Activated naive CD4-positive, alpha-beta T cell treated with anti-CD3 and anti-CD28 coated beads for 36 hours (primary cell): ENCODE measurements at regions of chr3 and their contacts with region 1.

Region 1: DNA sequence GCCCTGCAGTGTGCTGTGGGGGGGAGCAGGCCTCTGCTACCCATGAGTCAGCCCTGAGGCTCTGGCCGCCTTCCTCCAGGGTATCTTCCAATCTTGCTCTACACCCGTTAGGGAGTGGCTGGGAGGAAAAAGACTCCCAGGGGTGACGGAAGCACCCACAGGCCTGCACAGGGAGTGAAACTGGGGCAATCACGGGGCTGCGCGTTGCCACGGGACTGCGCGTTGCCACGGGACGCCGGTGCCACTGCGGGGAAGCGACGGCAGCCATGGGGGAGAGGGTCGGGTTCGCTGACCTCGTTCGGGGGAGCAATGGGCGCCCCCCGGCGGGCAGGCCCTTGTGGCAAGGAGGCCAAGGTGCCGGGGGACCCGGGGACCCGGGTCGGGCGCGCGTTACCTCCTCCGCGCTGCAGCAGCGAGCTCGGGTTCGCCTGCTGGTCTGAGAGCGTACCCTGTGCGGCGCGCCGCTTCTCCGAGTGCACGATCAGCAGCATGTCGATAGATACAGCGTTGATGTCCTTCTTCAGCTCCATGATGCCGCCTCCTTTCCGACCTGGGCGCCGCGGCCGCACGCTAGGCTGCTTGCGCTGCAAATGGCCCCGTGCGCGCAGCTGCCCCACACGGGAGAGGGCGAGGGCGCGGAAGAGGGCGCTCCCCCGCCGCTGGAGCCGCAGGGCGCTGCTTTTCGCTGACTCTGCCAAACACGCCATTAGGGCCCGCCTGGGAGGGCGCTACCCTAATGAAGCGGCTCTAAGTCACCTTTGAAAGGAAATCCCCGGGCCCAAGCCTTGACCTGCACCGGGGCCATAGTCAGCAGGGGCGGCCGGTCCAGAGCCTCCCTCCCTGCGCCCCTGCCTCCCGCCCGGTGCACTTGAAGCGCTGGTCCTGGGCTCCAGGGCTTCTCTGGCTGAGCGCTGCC is at the start of gene KY:
- DNase-seq: no peak
- H3K4me3 Mint-ChIP-seq: no peak within 1 kb of the TSS
- H3K27ac Mint-ChIP-seq: no peak within 1 kb of the TSS
- H3K4me1 Mint-ChIP-seq: no peaks in the 10 kb centered on the region
- H3K27me3 Mint-ChIP-seq: peaks cover 19% of the 10 kb centered on the region
- total RNA-seq, gene KY: not detected

Region 2: GRCh38 chr3:134430950-134431445 is 219.7 kb before region 1 on chr3:
- CTCF ChIA-PET with region 1: no interaction called
- intact Hi-C with region 1: no loop called
- DNase-seq: no peak
- H3K4me3 Mint-ChIP-seq: no peak overlapping the region
- H3K27ac Mint-ChIP-seq: no peak overlapping the region
- H3K4me1 Mint-ChIP-seq: no peaks in the 10 kb centered on the region
- H3K27me3 Mint-ChIP-seq: peaks cover 15% of the 10 kb centered on the region

Region 3: DNA sequence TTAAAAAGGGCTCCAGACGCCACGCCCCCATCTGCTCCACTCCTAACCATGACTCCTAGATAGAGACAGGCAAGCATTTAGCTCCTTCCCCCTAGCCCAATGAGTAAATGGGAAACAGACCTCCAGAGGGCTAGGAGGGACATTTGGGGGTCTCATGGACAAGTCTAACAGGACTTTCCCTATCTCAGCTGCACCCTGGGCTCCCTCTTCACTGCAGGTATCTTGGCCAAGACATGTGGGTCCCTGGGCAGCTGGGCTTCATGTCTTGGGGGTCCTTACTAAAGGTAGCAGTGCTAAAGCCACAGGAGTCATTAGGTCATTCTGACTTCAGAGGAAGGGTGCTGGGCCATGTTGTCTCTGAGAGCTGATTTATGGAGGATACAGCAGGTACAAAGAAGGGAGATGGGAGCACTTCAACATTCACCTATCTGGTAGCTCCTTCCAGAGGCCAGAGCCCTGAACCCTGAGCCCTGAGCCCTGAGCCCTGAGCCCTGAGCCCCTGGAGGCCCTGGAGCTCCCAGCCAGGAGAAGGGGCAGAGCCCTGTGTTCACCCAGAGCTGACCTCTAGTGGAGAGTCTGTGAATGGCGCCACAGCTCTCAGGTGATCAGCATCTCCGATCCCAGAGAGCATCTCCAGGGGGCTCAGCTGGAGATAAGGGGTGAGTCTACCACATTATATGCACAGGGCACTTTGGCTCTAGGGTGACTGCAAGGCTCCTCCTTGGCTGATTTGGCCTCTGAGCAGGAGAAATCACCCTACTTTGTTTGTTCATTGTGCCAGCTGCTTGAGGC is 104.3 kb after region 1 on chr3:
- CTCF ChIA-PET with region 1: interaction called, 4 read pairs
- intact Hi-C with region 1: loop called (anchors 1 kb)
- DNase-seq: peak; percentile 62
- H3K4me3 Mint-ChIP-seq: no peak overlapping the region
- H3K27ac Mint-ChIP-seq: no peak overlapping the region
- H3K4me1 Mint-ChIP-seq: no peaks in the 10 kb centered on the region
- H3K27me3 Mint-ChIP-seq: peaks cover 4% of the 10 kb centered on the region